T-cell (primary cell): ENCODE measurements at regions of chr11 and their contacts with region 1.

Region 1: GRCh38 chr11:103370076-103370475 is 260.9 kb downstream of the DYNC2H1 start:
- DNase-seq: no peak
- ATAC-seq: no peak
- H3K4me3 ChIP-seq: no peak overlapping the region
- H3K4me3 Mint-ChIP-seq: no peak overlapping the region
- H3K27ac ChIP-seq: no peak overlapping the region
- H3K27ac Mint-ChIP-seq: no peak overlapping the region
- H3K4me1 ChIP-seq: no peaks in the 10 kb centered on the region
- H3K4me1 Mint-ChIP-seq: no peaks in the 10 kb centered on the region
- H3K27me3 ChIP-seq: no peaks in the 10 kb centered on the region
- H3K27me3 Mint-ChIP-seq: no peaks in the 10 kb centered on the region

Region 2: DNA sequence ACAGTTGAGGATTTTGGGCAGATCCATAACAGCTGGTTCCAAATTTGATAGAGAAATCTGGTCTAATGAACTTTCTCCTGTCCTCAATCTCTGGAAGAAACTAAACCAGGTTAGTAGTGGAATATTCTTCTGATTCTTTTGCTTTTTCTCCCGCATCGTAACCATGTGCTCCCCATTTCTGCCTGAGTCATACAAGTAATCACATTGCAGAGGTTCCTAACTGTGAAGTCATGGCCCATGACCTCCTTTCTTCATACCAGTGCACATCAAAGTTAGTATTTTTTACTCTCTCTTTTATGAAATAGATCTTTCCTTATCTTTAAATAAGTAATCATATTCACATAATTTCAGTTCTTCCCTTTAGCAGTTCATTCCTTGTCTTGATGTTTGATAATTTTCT is 11.8 kb before region 1 on chr11:
- CTCF ChIA-PET with region 1: interaction called in 1 of 2 experiments, 3 read pairs
- POLR2A ChIA-PET with region 1: interaction called in 1 of 2 experiments, 19 read pairs
- DNase-seq: no peak
- ATAC-seq: no peak
- H3K4me3 ChIP-seq: no peak overlapping the region
- H3K4me3 Mint-ChIP-seq: no peak overlapping the region
- H3K27ac ChIP-seq: no peak overlapping the region
- H3K27ac Mint-ChIP-seq: no peak overlapping the region
- H3K4me1 ChIP-seq: no peaks in the 10 kb centered on the region
- H3K4me1 Mint-ChIP-seq: no peaks in the 10 kb centered on the region
- H3K27me3 ChIP-seq: no peaks in the 10 kb centered on the region
- H3K27me3 Mint-ChIP-seq: no peaks in the 10 kb centered on the region

Region 3: DNA sequence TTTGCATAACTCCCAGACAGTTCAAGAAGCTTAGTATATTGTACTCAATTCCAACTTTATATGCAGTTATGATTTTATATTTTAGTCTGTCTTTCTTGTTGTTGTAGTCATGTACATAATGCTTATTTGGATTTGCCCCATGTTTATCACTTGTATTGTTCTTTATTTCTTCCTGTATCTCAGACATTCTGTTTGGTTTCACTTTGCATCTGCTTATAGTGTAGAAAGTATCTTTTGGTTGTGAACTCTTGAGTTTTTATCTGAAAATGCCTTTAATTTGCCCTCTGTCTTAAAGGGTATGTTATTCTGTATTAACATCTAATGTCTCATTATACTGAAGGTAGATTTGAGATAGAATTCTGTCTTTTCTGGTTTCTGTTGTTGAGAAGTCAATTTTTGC is 14.6 kb after region 1 on chr11:
- CTCF ChIA-PET with region 1: no interaction called
- POLR2A ChIA-PET with region 1: no interaction called
- DNase-seq: no peak
- ATAC-seq: no peak
- H3K4me3 ChIP-seq: no peak overlapping the region
- H3K4me3 Mint-ChIP-seq: no peak overlapping the region
- H3K27ac ChIP-seq: no peak overlapping the region
- H3K27ac Mint-ChIP-seq: no peak overlapping the region
- H3K4me1 ChIP-seq: no peaks in the 10 kb centered on the region
- H3K4me1 Mint-ChIP-seq: peaks cover 0 to 7% (median 4%) of the 10 kb centered on the region in 3 donors
- H3K27me3 ChIP-seq: no peaks in the 10 kb centered on the region
- H3K27me3 Mint-ChIP-seq: no peaks in the 10 kb centered on the region

Region 4: DNA sequence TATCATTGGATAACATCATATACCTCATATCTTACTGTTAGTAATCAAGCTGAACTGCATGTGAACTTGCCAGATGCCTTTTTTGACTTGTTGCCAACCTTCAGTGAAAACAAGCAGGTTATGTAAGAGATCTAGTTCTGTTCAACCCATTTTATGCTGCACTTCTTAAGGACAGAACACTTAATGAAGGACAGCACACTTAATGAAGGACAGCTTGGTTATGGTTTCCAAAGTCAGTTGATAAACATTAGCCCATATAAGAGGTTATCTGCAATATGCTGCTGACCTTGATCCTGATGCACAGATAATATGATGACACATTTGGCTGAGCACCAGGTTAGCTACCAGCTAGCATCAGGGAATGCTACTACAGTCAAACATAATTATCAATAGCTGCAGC is 1152.6 kb after region 1 on chr11:
- CTCF ChIA-PET with region 1: no interaction called
- POLR2A ChIA-PET with region 1: no interaction called
- DNase-seq: no peak
- ATAC-seq: no peak
- H3K4me3 ChIP-seq: no peak overlapping the region
- H3K4me3 Mint-ChIP-seq: no peak overlapping the region
- H3K27ac ChIP-seq: no peak overlapping the region
- H3K27ac Mint-ChIP-seq: no peak overlapping the region
- H3K4me1 ChIP-seq: no peaks in the 10 kb centered on the region
- H3K4me1 Mint-ChIP-seq: no peaks in the 10 kb centered on the region
- H3K27me3 ChIP-seq: no peaks in the 10 kb centered on the region
- H3K27me3 Mint-ChIP-seq: peaks cover 0 to 3% of the 10 kb centered on the region in 2 donors